H1 (cell line): ENCODE measurements at regions of chr16 and their contacts with region 1.

Region 1: GRCh38 chr16:27235055-27235937 is 32.0 kb downstream of the KDM8 start:
- DNase-seq: no peak
- H3K4me3 ChIP-seq: no peak overlapping the region
- H3K27ac ChIP-seq: no peak overlapping the region
- H3K4me1 ChIP-seq: no peaks in the 10 kb centered on the region; a peak in 1 of 7 replicates
- H3K27me3 ChIP-seq: no peaks in the 10 kb centered on the region
- CTCF ChIP-seq: peak; percentile 73 to 79 (median 76)
- EP300 ChIP-seq: no peak
- POLR2A ChIP-seq: no peak
- RAD21 ChIP-seq: peak; percentile 77 to 81

Region 2: GRCh38 chr16:27179500-27180072 is 55.7 kb before region 1 on chr16:
- CTCF ChIA-PET with region 1: interaction called, 33 read pairs
- POLR2A ChIA-PET with region 1: no interaction called
- DNase-seq: peak; percentile 50 to 96
- H3K4me3 ChIP-seq: no peak overlapping the region
- H3K27ac ChIP-seq: no peak overlapping the region
- H3K4me1 ChIP-seq: peaks cover 0 to 3% (median 0%) of the 10 kb centered on the region in 4 experiments; a peak in 3 of 7 replicates
- H3K27me3 ChIP-seq: no peaks in the 10 kb centered on the region
- CTCF ChIP-seq: peak; percentile 86 to 98 (median 95)
- EP300 ChIP-seq: no peak
- POLR2A ChIP-seq: no peak
- RAD21 ChIP-seq: peak; percentile 81 to 86

Region 3: DNA sequence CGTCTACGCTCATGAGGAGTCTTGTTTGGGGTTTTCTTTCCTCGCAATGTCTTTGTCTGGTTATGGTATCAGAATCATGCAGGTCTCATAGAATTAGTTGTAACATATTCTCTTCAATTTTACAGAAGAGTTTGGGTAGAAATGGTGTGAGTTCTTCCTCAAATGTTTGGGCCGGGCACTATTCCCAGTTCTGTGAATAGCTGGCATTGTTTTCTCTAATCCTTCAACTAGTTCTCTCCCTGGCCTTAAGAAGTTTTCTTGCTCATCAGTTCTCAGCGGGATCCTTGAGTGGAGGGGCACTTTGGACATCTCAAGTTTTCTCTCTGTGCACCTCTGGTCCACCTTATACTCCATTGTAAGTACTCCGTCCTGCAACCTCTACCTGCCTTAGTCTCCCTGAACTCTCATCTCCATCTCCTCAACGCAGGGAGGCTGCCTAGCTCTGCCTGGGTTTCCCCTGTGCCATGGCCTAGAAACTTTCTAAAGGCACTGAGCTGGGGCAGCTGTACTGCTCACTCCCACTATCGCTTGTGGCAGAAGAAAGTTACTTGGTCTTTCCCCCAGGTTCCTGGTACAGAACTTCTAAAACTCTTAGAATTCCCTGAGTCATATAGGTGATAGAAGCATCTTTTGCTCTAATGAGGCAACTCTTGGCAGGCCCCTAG is 16.4 kb after region 1 on chr16:
- CTCF ChIA-PET with region 1: interaction called, 15 read pairs
- POLR2A ChIA-PET with region 1: interaction called, 3 read pairs
- DNase-seq: no peak
- H3K4me3 ChIP-seq: no peak overlapping the region
- H3K27ac ChIP-seq: no peak overlapping the region
- H3K4me1 ChIP-seq: no peaks in the 10 kb centered on the region
- H3K27me3 ChIP-seq: no peaks in the 10 kb centered on the region
- CTCF ChIP-seq: no peak
- EP300 ChIP-seq: no peak
- POLR2A ChIP-seq: no peak
- RAD21 ChIP-seq: no peak

Region 4: GRCh38 chr16:27315277-27316037 is 80.2 kb after region 1 on chr16:
- CTCF ChIA-PET with region 1: interaction called, 13 read pairs
- POLR2A ChIA-PET with region 1: no interaction called
- DNase-seq: peak in 1 of 2 experiments; percentile 60
- H3K4me3 ChIP-seq: peak overlapping the region in 1 of 4 experiments; percentile 3; a peak in 1 of 8 replicates
- H3K27ac ChIP-seq: no peak overlapping the region
- H3K4me1 ChIP-seq: peaks cover 8 to 20% (median 10%) of the 10 kb centered on the region in 4 experiments
- H3K27me3 ChIP-seq: peaks cover 0 to 3% (median 2%) of the 10 kb centered on the region in 4 experiments; a peak in 3 of 7 replicates
- CTCF ChIP-seq: peak in 2 of 3 experiments; percentile 8 to 21; a peak in 2 of 4 replicates
- EP300 ChIP-seq: no peak
- POLR2A ChIP-seq: no peak
- RAD21 ChIP-seq: no peak; a peak in 1 of 4 replicates

Region 5: GRCh38 chr16:27355610-27356009 is 120.3 kb after region 1 on chr16:
- CTCF ChIA-PET with region 1: interaction called, 55 read pairs
- POLR2A ChIA-PET with region 1: interaction called, 3 read pairs
- DNase-seq: peak; percentile 41 to 83
- H3K4me3 ChIP-seq: no peak overlapping the region
- H3K27ac ChIP-seq: no peak overlapping the region
- H3K4me1 ChIP-seq: 0 out of 7 replicates have a peak, but pooled peaks cover 0 to 2% (median 0%) of the 10 kb centered on the region in 4 experiments
- H3K27me3 ChIP-seq: no peaks in the 10 kb centered on the region
- CTCF ChIP-seq: peak; percentile 68 to 74 (median 74)
- EP300 ChIP-seq: no peak
- POLR2A ChIP-seq: no peak
- RAD21 ChIP-seq: peak; percentile 54 to 72

Region 6: DNA sequence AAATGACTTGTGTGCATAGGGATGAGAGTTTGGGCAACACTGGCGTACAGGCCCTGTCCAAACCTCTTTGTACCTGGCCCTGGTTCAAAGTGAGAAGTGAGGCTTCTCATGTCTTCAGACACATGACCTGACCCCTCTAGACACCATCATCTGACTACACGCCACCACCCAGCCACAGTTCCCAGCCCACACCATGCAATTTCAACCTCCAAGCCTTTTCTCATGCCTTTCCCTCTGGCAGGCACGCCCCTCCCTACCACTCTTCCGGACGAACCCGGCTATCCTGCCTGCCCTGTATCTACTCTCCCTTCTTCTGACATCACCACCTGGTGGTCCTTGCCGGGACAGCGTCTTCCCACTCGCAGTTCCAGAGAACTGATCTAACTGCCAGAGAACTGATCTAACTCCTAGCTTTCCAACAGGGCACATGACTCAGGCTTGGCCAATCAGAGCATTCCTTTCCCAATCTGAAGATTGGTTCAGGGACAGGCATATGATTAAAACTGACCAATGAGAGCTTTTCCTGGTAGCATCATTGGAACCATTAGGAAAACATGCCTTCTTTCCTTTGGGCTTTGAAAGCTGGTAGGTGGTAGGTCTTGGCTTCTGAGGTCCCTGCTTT is 139.6 kb after region 1 on chr16:
- CTCF ChIA-PET with region 1: interaction called, 241 read pairs
- POLR2A ChIA-PET with region 1: interaction called, 4 read pairs
- DNase-seq: peak; percentile 87 to 93
- H3K4me3 ChIP-seq: no peak overlapping the region
- H3K27ac ChIP-seq: no peak overlapping the region
- H3K4me1 ChIP-seq: peaks cover 0 to 2% (median 0%) of the 10 kb centered on the region in 4 experiments; a peak in 3 of 7 replicates
- H3K27me3 ChIP-seq: no peaks in the 10 kb centered on the region
- CTCF ChIP-seq: peak; percentile 64 to 86 (median 79)
- EP300 ChIP-seq: no peak
- POLR2A ChIP-seq: no peak
- RAD21 ChIP-seq: peak; percentile 63 to 73